Breast epithelium (tissue), 4 donors: ENCODE measurements at regions of chr1 and their contacts with region 1.

Region 1: GRCh38 chr1:61784726-61785125 is 42.4 kb downstream of the PATJ start:
- DNase-seq: no peak
- H3K4me3 ChIP-seq: no peak overlapping the region
- H3K27ac ChIP-seq: no peak overlapping the region
- H3K4me1 ChIP-seq: no peaks in the 10 kb centered on the region
- H3K27me3 ChIP-seq: no peaks in the 10 kb centered on the region
- CTCF ChIP-seq: no peak
- POLR2A ChIP-seq: no peak

Region 2: DNA sequence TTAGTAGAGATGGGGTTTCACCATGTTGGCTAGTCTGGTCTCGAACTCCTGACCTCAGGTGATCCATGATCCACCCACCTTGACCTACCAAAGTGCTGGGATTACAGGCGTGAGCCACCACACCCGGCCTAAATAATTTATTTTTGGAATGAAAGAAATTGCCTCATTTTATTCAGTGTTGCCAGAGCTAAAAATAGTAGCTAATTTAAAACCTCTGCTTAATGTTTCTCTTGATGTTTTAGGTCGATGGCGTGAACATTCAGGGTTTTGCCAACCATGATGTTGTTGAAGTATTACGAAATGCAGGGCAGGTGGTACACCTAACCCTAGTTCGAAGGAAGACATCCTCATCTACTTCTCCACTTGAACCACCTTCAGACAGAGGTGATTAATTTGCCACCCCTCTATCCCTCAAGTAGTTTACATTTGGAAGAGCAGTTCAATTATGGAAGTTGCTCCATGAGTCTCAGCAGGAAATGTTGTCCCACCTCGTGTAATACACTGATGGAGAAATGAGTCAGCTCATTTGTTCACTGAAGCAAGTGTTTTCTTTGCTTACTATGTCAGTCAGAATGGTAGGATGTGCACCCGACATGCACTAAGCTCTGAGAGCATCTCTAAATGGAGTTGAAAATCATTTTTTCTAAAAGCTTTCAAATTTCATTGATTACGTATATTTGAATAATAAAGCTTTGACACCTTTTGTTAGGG is 12.5 kb after region 1 on chr1:
- intact Hi-C with region 1: loop called (anchors 1 kb)
- DNase-seq: no peak
- H3K4me3 ChIP-seq: no peak overlapping the region
- H3K27ac ChIP-seq: no peak overlapping the region
- H3K4me1 ChIP-seq: no peaks in the 10 kb centered on the region
- H3K27me3 ChIP-seq: no peaks in the 10 kb centered on the region
- CTCF ChIP-seq: no peak
- POLR2A ChIP-seq: no peak